B cell (primary cell): ENCODE measurements at regions of chr10 and their contacts with region 1.

Region 1: GRCh38 chr10:98309366-98310355 is 41.7 kb upstream of the LOXL4 start:
- DNase-seq: peak; percentile 35
- ATAC-seq: no peak
- H3K4me3 ChIP-seq: peak overlapping the region in 1 of 5 experiments; percentile 7
- H3K4me3 Mint-ChIP-seq: peak overlapping the region; percentile 58
- H3K27ac ChIP-seq: no peak overlapping the region
- H3K27ac Mint-ChIP-seq: no peak overlapping the region
- H3K4me1 ChIP-seq: peaks cover 6 to 8% of the 10 kb centered on the region in 2 donors
- H3K4me1 Mint-ChIP-seq: peaks cover 7% of the 10 kb centered on the region
- H3K27me3 ChIP-seq: peaks cover 0 to 31% (median 5%) of the 10 kb centered on the region in 4 experiments
- H3K27me3 Mint-ChIP-seq: peaks cover 34% of the 10 kb centered on the region
- CTCF ChIP-seq: no peak

Region 2: DNA sequence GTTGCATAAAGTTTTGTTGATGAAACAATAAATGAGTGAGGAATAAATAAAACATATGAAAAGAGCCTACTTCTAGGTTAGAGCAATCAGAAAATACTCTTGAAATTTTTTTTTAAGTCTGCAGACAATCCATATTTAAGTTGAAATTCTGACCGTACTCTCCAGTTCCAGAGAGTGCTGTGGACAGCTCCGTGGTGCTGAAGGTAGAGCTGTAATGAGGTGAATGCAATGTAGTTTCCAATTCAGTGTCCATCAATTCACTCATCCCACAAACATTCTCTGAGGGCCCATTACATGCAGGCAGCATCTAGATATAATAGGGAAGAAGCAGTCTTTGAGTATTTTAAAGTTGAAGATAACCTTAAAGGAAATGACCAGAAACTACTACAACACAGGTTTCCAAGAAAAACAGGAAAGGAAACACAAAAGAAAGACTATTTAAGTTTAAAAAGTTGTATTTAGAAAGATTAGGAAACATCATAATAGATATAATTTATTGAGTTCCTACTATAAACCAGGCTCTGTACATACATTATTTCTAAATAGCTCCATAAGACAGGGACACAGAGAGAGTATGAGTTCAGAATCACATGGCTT is 235.2 kb before region 1 on chr10:
- CTCF ChIA-PET with region 1: no interaction called
- POLR2A ChIA-PET with region 1: no interaction called
- intact Hi-C with region 1: no loop called
- DNase-seq: no peak
- ATAC-seq: no peak
- H3K4me3 ChIP-seq: no peak overlapping the region
- H3K4me3 Mint-ChIP-seq: no peak overlapping the region
- H3K27ac ChIP-seq: no peak overlapping the region
- H3K27ac Mint-ChIP-seq: no peak overlapping the region
- H3K4me1 ChIP-seq: no peaks in the 10 kb centered on the region
- H3K4me1 Mint-ChIP-seq: no peaks in the 10 kb centered on the region
- H3K27me3 ChIP-seq: peaks cover 0 to 6% (median 0%) of the 10 kb centered on the region in 4 experiments
- H3K27me3 Mint-ChIP-seq: peaks cover 39% of the 10 kb centered on the region
- CTCF ChIP-seq: no peak

Region 3: GRCh38 chr10:98170249-98171117 is 139.2 kb before region 1 on chr10:
- CTCF ChIA-PET with region 1: interaction called, 9 read pairs
- POLR2A ChIA-PET with region 1: no interaction called
- intact Hi-C with region 1: loop called (anchors 2 kb)
- DNase-seq: peak; percentile 59
- ATAC-seq: peak; percentile 33
- H3K4me3 ChIP-seq: no peak overlapping the region
- H3K4me3 Mint-ChIP-seq: no peak overlapping the region
- H3K27ac ChIP-seq: no peak overlapping the region
- H3K27ac Mint-ChIP-seq: no peak overlapping the region
- H3K4me1 ChIP-seq: peaks cover 23 to 25% of the 10 kb centered on the region in 2 donors
- H3K4me1 Mint-ChIP-seq: peaks cover 33% of the 10 kb centered on the region
- H3K27me3 ChIP-seq: no peaks in the 10 kb centered on the region
- H3K27me3 Mint-ChIP-seq: no peaks in the 10 kb centered on the region
- CTCF ChIP-seq: peak; percentile 91